Prostate gland (tissue), 2 donors: ENCODE measurements at regions of chr3 and their contacts with region 1.

Region 1: GRCh38 chr3:98039322-98040024 is 4.4 kb upstream of the GABRR3 start:
- DNase-seq: peak; percentile 69
- H3K4me3 ChIP-seq: no peak overlapping the region
- H3K27ac ChIP-seq: no peak overlapping the region
- H3K4me1 ChIP-seq: no peaks in the 10 kb centered on the region
- H3K27me3 ChIP-seq: no peaks in the 10 kb centered on the region
- CTCF ChIP-seq: peak; percentile 76 to 98 (median 85)
- POLR2A ChIP-seq: no peak

Region 2: DNA sequence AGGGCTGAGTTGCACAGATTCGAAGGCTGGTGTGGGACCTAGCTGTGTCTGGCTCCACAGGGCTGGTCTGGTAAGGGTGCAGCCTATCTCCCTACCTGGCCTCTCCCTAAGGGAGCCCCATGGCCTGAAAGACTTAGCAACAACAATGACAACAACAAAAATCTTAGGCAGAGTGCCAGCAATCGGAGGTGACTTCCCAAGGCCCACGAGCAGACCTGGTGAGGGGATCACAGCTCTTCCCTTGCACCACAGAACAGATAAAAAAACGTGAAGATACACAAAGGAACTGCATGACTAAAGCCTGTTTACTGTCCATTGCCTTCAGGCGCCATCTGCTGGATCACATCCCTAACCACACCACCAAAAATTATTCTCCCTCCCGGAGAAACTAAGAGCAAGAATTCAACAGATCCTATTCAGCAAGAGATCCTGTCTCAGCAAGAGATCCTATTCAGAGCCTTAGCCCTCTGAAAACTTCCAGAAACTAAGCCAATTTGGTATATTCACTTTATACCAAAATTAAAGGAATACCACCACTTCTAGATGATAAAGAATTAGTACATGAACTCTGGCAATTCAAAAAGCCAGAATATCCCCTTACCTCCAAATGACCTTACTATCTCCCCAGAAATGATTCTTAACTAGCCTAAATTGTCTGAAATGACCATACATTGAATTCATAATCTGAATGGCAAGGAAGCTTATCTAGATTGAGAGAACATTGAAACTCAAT is 290.1 kb after region 1 on chr3:
- intact Hi-C with region 1: loop called (anchors 5 kb)
- DNase-seq: peak; percentile 38
- H3K4me3 ChIP-seq: no peak overlapping the region
- H3K27ac ChIP-seq: no peak overlapping the region
- H3K4me1 ChIP-seq: no peaks in the 10 kb centered on the region
- H3K27me3 ChIP-seq: no peaks in the 10 kb centered on the region
- CTCF ChIP-seq: peak; percentile 24 to 80 (median 62)
- POLR2A ChIP-seq: no peak

Region 3: GRCh38 chr3:98343647-98344507 is 304.4 kb after region 1 on chr3:
- intact Hi-C with region 1: loop called (anchors 5 kb)
- DNase-seq: no peak
- H3K4me3 ChIP-seq: no peak overlapping the region
- H3K27ac ChIP-seq: no peak overlapping the region
- H3K4me1 ChIP-seq: no peaks in the 10 kb centered on the region
- H3K27me3 ChIP-seq: no peaks in the 10 kb centered on the region
- CTCF ChIP-seq: no peak
- POLR2A ChIP-seq: no peak